ENCODE measurements at regions of chr16 and their contacts with region 1.

Region 1: GRCh38 chr16:788394-789126 is at the start of gene CHTF18:
- DNase-seq: peak; percentile 94
- ATAC-seq: peak; percentile 97
- H3K4me3 Mint-ChIP-seq: peak within 1 kb of the TSS; percentile 86
- H3K27ac Mint-ChIP-seq: peak within 1 kb of the TSS; percentile 56
- H3K4me1 Mint-ChIP-seq: peaks cover 7% of the 10 kb centered on the region
- H3K27me3 Mint-ChIP-seq: no peaks in the 10 kb centered on the region
- CTCF ChIP-seq: no peak
- total RNA-seq, gene CHTF18: 42.4 and 45.5 TPM in 2 replicates

Region 2: DNA sequence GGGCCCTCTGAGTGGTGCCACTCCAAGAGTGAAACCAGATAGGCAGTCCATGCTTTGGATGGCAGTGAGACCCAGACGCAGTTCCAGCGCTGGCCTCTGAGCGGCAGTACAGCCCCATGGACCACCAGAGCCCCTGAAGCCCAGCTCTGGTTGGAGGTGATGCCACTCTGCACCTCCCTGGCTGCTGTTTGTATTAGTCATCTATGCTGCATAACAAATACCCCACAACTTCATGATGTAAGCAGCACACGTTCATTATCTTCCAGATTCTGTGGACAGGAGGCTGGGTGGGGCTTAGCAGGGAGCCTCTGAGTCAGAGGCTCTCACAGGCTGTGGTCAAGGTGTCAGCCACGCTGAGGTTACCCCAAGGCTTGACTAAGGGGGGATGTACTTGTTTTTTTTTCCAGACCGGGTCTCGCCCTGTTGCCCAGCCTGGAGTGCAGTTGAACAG is 396.6 kb before region 1 on chr16:
- CTCF ChIA-PET with region 1: no interaction called
- POLR2A ChIA-PET with region 1: no interaction called
- intact Hi-C with region 1: loop called (anchors 10 kb)
- DNase-seq: peak; percentile 64
- ATAC-seq: peak; percentile 91
- H3K4me3 Mint-ChIP-seq: no peak overlapping the region
- H3K27ac Mint-ChIP-seq: peak overlapping the region; percentile 41
- H3K4me1 Mint-ChIP-seq: peaks cover 16% of the 10 kb centered on the region
- H3K27me3 Mint-ChIP-seq: no peaks in the 10 kb centered on the region
- CTCF ChIP-seq: no peak